ENCODE measurements at regions of chr7 and their contacts with region 1.

Region 1: GRCh38 chr7:55469271-55469681 is 103.0 kb downstream of the VOPP1 start:
- DNase-seq: peak in 7 of 9 donors; percentile 57 to 85 (median 76)
- ATAC-seq: peak; percentile 86
- H3K4me3 ChIP-seq: peak overlapping the region; percentile 21
- H3K4me3 Mint-ChIP-seq: peak overlapping the region; percentile 33 to 75 (median 68)
- H3K27ac ChIP-seq: peak overlapping the region; percentile 70
- H3K27ac Mint-ChIP-seq: peak overlapping the region; percentile 85 to 97 (median 93)
- H3K4me1 ChIP-seq: peaks cover 31 to 76% of the 10 kb centered on the region in 2 donors
- H3K4me1 Mint-ChIP-seq: peaks cover 25 to 86% (median 74%) of the 10 kb centered on the region in 7 donors
- H3K27me3 ChIP-seq: no peaks in the 10 kb centered on the region
- H3K27me3 Mint-ChIP-seq: no peaks in the 10 kb centered on the region

Region 2: DNA sequence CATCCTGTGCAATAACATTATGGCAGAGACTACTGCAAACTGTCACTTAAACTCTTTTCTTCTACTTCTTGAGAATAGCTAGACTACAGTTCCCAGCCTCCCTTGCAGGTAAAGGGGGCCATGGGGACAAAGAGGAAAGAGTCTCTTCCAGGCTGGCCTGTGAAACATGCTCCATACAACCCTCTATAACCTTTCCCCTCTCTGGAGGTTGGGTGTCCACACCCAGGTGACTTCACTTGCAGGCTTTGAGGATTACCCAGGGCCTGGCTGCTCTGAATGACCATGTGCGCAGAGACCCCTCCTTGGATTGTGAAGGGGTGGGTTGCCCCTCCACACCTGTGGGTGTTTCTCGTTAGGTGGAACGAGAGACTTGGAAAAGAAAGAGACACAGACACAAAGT is 794.4 kb before region 1 on chr7:
- CTCF ChIA-PET with region 1: no interaction called
- POLR2A ChIA-PET with region 1: no interaction called
- intact Hi-C with region 1: no loop called
- DNase-seq: no peak
- ATAC-seq: no peak
- H3K4me3 ChIP-seq: no peak overlapping the region
- H3K4me3 Mint-ChIP-seq: no peak overlapping the region
- H3K27ac ChIP-seq: no peak overlapping the region
- H3K27ac Mint-ChIP-seq: no peak overlapping the region
- H3K4me1 ChIP-seq: no peaks in the 10 kb centered on the region
- H3K4me1 Mint-ChIP-seq: no peaks in the 10 kb centered on the region
- H3K27me3 ChIP-seq: no peaks in the 10 kb centered on the region
- H3K27me3 Mint-ChIP-seq: peaks cover 0 to 18% (median 0%) of the 10 kb centered on the region in 5 donors

Region 3: GRCh38 chr7:55409482-55410225 is 59.6 kb before region 1 on chr7:
- CTCF ChIA-PET with region 1: no interaction called
- POLR2A ChIA-PET with region 1: no interaction called
- intact Hi-C with region 1: no loop called
- DNase-seq: no peak
- ATAC-seq: no peak
- H3K4me3 ChIP-seq: no peak overlapping the region
- H3K4me3 Mint-ChIP-seq: no peak overlapping the region
- H3K27ac ChIP-seq: no peak overlapping the region
- H3K27ac Mint-ChIP-seq: peak overlapping the region in 1 of 9 donors; percentile 20
- H3K4me1 ChIP-seq: no peaks in the 10 kb centered on the region
- H3K4me1 Mint-ChIP-seq: peaks cover 0 to 1% (median 0%) of the 10 kb centered on the region in 7 donors
- H3K27me3 ChIP-seq: no peaks in the 10 kb centered on the region
- H3K27me3 Mint-ChIP-seq: no peaks in the 10 kb centered on the region

Region 4: DNA sequence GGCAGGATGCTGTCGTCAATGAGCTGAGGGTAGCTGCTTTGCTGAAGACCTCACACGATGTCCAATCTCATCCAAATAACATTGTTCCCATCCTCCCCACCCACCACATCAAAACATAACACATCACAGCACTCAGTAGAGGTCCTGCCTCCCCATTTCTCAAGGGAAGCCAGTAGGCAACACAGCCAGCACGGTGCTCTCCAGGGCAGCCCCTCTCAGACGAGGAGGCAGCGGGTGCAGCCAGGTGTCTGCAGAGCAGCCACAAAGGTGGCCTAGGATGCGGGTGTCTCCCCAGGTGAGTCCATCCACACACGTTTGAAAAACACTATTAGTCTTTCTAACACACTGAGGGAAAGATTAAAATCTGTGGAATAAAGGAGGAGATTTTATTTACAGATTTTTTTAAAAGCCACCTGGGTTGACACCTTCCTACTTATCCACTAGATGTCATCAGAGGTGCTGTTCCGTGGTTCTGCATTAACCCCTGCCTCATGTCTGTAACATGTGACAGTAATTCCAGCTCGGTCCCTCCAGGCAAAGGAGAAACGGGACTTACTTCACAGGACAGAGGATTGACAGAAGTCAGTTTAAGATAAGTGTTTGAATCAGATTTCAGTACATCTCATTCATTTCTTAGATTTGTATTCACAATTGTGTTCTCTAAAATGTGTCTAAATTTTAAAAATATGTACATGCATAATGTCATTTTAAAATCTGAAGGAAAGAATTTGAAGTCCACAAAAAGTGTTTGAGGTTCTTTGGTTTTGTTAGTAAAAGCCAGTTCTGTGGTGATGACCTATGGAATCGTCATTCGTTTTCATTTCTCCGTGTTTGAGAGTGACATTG is 36.1 kb before region 1 on chr7:
- CTCF ChIA-PET with region 1: interaction called, 7 read pairs
- POLR2A ChIA-PET with region 1: interaction called, 12 read pairs
- intact Hi-C with region 1: loop called (anchors 1 to 5 kb)
- DNase-seq: peak in 5 of 9 donors; percentile 44 to 54 (median 48)
- ATAC-seq: peak; percentile 61
- H3K4me3 ChIP-seq: no peak overlapping the region
- H3K4me3 Mint-ChIP-seq: peak overlapping the region in 1 of 10 donors; percentile 19
- H3K27ac ChIP-seq: no peak overlapping the region
- H3K27ac Mint-ChIP-seq: peak overlapping the region in 5 of 9 donors; percentile 7 to 76 (median 67)
- H3K4me1 ChIP-seq: peaks cover 0 to 29% of the 10 kb centered on the region in 2 donors
- H3K4me1 Mint-ChIP-seq: peaks cover 17 to 46% (median 40%) of the 10 kb centered on the region in 7 donors
- H3K27me3 ChIP-seq: no peaks in the 10 kb centered on the region
- H3K27me3 Mint-ChIP-seq: no peaks in the 10 kb centered on the region

Region 5: GRCh38 chr7:55438757-55439525 is 30.3 kb before region 1 on chr7:
- CTCF ChIA-PET with region 1: interaction called, 3 read pairs
- POLR2A ChIA-PET with region 1: interaction called, 12 read pairs
- intact Hi-C with region 1: loop called in 1 of 2 experiments (anchors 5 kb)
- DNase-seq: peak in 1 of 9 donors; percentile 19
- ATAC-seq: no peak
- H3K4me3 ChIP-seq: no peak overlapping the region
- H3K4me3 Mint-ChIP-seq: peak overlapping the region in 8 of 10 donors; percentile 11 to 71 (median 52)
- H3K27ac ChIP-seq: no peak overlapping the region
- H3K27ac Mint-ChIP-seq: peak overlapping the region; percentile 10 to 92 (median 45)
- H3K4me1 ChIP-seq: peaks cover 0 to 44% of the 10 kb centered on the region in 2 donors
- H3K4me1 Mint-ChIP-seq: peaks cover 30 to 59% (median 51%) of the 10 kb centered on the region in 7 donors
- H3K27me3 ChIP-seq: no peaks in the 10 kb centered on the region
- H3K27me3 Mint-ChIP-seq: no peaks in the 10 kb centered on the region

Region 6: GRCh38 chr7:55457801-55458200 is 11.5 kb before region 1 on chr7:
- CTCF ChIA-PET with region 1: no interaction called
- POLR2A ChIA-PET with region 1: interaction called, 11 read pairs
- intact Hi-C with region 1: loop called in 1 of 2 experiments (anchors 1 kb)
- DNase-seq: no peak
- ATAC-seq: no peak
- H3K4me3 ChIP-seq: no peak overlapping the region
- H3K4me3 Mint-ChIP-seq: no peak overlapping the region
- H3K27ac ChIP-seq: no peak overlapping the region
- H3K27ac Mint-ChIP-seq: peak overlapping the region in 2 of 9 donors; percentile 11 to 32
- H3K4me1 ChIP-seq: peaks cover 0 to 8% of the 10 kb centered on the region in 2 donors
- H3K4me1 Mint-ChIP-seq: peaks cover 10 to 61% (median 41%) of the 10 kb centered on the region in 7 donors
- H3K27me3 ChIP-seq: no peaks in the 10 kb centered on the region
- H3K27me3 Mint-ChIP-seq: no peaks in the 10 kb centered on the region

Region 7: GRCh38 chr7:55483046-55483445 is 13.8 kb after region 1 on chr7:
- CTCF ChIA-PET with region 1: interaction called, 3 read pairs
- POLR2A ChIA-PET with region 1: interaction called, 7 read pairs
- intact Hi-C with region 1: loop called in 1 of 2 experiments (anchors 2 kb)
- DNase-seq: no peak
- ATAC-seq: no peak
- H3K4me3 ChIP-seq: no peak overlapping the region
- H3K4me3 Mint-ChIP-seq: no peak overlapping the region
- H3K27ac ChIP-seq: no peak overlapping the region
- H3K27ac Mint-ChIP-seq: peak overlapping the region; percentile 5 to 91 (median 75)
- H3K4me1 ChIP-seq: peaks cover 0 to 14% of the 10 kb centered on the region in 2 donors
- H3K4me1 Mint-ChIP-seq: peaks cover 37 to 94% (median 80%) of the 10 kb centered on the region in 7 donors
- H3K27me3 ChIP-seq: no peaks in the 10 kb centered on the region
- H3K27me3 Mint-ChIP-seq: no peaks in the 10 kb centered on the region